ENCODE measurements at regions of chr4 and their contacts with region 1.

Region 1: DNA sequence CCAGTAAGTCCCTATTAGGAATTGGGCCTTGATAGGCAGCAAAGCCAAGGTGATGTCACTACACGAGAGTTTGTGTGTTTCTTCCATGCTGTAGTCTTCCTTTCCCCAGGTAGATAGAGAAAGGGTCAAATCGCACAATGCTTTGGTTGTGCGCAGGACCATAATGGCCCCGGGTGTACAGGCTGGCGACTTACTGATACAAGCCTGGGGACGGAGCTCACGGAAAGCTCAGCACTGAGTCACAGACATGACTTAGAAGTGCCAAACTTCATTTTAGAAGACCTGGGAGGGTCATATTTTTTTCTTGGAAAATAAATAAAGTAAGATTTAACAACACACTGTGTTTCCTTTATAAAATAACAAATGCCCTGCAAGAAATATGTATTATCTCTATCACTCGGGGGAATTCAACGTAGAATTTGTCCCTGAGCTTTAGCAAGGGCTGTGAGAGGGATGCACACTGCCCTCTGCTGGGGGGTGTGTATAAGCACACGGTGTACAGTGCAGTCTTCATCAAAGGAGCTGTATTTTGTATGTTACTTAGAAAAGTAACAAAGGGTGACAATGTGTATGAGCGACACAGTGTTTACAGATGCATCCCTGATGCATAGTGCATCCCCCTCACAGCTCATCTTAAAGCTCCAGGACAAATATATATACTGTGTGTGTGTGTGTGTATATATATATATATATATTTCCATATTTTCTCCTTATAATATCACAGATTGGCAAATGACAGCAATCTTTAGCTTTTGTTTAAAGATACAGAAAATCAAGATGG is 254.5 kb upstream of the VEGFC start:
- DNase-seq: peak; percentile 28
- CTCF ChIP-seq: peak; percentile 83

Region 2: DNA sequence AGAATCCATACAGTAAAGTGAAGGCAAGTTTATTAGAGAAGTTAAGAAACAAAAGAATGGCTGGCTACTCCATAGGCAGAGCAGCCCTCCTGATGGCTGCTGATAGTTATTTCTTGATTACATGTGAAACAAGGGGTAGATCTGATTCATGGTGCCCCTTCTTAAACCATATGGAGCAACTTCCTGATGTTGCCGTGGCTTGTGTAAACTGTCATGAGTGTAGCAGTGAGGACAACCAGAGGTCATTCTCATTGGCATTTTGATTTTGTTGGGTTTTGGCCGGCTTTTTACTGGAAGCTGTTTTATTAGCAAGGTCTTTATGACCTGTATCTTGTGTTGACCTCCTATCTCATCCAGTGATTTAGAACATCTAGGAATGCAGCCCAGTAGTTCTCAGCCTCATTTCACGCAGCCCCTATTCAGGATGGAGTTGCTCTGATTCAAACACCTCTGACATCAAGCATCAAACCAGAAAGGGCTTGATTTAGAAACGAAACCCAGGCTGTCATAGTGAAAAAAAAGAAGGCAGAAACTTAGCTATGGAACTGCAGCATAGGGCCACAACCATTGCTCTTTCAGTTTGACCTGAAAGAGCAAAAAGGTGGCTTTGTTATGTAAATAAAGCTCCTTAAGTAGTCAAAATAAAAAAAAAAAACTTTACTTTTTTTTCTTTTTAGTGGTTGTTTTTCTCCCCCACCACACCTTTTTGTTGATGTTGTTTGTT is 689.7 kb before region 1 on chr4:
- in situ Hi-C with region 1: loop called (anchors 25 kb)
- DNase-seq: peak; percentile 55
- CTCF ChIP-seq: no peak

Region 3: GRCh38 chr4:176789955-176790354 is 257.3 kb before region 1 on chr4:
- in situ Hi-C with region 1: no loop called
- DNase-seq: peak; percentile 73
- CTCF ChIP-seq: peak; percentile 53

Measured in GM13977 (cell line).